ENCODE measurements at regions of chr16 and their contacts with region 1.

Region 1: GRCh38 chr16:8880839-8881510 is 1.2 kb upstream of the LITAFD start:
- DNase-seq: no peak
- ATAC-seq: no peak

Region 2: GRCh38 chr16:8567750-8568617 is 313.0 kb before region 1 on chr16:
- intact Hi-C with region 1: loop called (anchors 2 kb)
- DNase-seq: no peak
- ATAC-seq: peak; percentile 72

Region 3: DNA sequence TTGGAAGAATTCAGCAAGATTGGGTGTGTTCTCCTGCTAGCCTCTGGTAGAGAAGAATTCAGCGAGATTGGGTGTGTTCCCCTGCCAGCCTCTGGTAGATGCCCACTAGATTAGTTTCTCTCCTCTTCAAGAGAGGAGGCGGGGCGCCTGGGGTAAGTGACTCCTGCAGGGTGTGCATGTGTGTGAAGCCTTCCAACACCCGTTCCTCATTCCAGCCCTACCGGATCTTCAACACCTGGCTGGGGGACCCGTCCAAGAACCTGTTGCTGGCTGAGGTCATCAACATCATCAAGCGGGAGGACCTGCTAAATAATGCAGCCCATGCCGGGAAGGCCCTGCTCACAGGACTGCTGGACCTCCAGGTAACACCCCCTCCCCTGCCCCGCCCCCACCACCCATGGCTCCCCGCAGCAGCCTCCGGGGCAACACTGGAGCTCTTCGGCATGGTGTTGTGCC is 104.8 kb before region 1 on chr16:
- intact Hi-C with region 1: no loop called
- DNase-seq: no peak
- ATAC-seq: no peak

Measured in Right ventricle myocardium inferior (tissue), 1 donor.